HEK293 (cell line): ENCODE measurements at regions of chr1 and their contacts with region 1.

Region 1: DNA sequence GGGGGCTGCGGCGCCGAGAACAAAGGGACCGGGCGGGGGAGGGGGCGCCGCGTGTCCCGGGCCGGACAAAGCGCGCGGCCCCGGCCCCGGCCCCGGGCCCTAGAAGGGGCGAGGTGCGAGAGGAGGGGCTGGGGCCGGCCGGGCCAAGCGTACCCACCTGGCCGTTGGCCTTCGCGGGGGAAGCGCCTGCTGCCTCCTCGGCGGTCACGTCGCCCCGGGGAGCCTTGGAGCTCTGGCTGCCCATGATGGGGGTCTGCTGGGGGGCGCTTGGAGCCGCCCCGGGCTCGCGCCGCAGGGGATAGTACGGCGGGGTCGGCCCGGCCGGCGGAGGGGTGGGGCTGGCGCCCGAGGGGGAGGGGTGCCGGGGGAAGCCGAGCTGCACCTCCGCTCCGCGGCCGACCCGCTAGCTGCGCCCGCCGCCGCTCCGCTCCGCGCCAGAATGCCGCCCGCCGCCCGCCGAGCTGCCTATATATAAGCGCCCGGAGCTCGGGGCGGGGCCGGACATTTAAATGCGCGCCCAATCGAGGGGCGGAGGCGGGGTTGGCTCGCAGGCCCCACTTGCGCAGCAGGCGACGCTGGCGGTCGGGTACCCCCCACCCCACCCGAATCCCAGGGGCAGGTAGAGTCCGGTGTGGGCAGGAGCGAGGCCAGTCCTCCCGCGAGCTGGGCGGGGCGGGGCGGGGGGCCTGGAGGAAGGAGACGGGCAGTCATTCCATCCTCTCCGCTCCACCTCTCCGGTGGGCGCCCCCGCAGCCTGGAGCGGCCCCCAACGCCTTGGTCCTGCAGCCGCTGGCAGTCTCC is at the start of gene MARCKSL1:
- H3K4me3 ChIP-seq: peak within 1 kb of the TSS; percentile 84
- H3K27ac ChIP-seq: peak within 1 kb of the TSS; percentile 76; the same call in 1 of the 2 replicates
- H3K4me1 ChIP-seq: no peaks in the 10 kb centered on the region
- CTCF ChIP-seq: no peak

Region 2: DNA sequence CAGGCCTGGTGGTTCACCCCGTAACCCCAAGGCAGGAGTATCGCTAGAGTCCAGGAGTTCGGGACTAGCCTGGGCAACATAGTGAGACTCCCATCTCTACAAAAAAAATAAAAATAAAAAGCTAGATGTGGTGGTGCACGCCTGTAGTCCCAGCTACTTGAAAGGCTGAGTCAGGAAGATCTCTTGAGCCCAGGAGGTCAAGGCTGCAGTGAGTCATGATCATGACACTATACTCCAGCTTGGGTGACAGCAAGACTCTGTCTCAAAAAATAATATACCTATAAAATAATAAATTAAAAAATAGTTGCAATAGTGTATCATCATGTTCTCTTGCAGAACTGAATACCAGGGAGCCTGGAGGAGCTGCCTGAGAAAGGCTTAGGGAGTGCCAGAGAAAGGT is 283.1 kb before region 1 on chr1:
- CTCF ChIA-PET with region 1: no interaction called
- POLR2A ChIA-PET with region 1: no interaction called
- H3K4me3 ChIP-seq: no peak overlapping the region
- H3K27ac ChIP-seq: no peak overlapping the region
- H3K4me1 ChIP-seq: no peaks in the 10 kb centered on the region
- CTCF ChIP-seq: no peak

Region 3: GRCh38 chr1:32172621-32173245 is 163.3 kb before region 1 on chr1:
- CTCF ChIA-PET with region 1: no interaction called
- POLR2A ChIA-PET with region 1: no interaction called
- H3K4me3 ChIP-seq: no peak overlapping the region
- H3K27ac ChIP-seq: no peak overlapping the region
- H3K4me1 ChIP-seq: no peaks in the 10 kb centered on the region
- CTCF ChIP-seq: no peak

Region 4: DNA sequence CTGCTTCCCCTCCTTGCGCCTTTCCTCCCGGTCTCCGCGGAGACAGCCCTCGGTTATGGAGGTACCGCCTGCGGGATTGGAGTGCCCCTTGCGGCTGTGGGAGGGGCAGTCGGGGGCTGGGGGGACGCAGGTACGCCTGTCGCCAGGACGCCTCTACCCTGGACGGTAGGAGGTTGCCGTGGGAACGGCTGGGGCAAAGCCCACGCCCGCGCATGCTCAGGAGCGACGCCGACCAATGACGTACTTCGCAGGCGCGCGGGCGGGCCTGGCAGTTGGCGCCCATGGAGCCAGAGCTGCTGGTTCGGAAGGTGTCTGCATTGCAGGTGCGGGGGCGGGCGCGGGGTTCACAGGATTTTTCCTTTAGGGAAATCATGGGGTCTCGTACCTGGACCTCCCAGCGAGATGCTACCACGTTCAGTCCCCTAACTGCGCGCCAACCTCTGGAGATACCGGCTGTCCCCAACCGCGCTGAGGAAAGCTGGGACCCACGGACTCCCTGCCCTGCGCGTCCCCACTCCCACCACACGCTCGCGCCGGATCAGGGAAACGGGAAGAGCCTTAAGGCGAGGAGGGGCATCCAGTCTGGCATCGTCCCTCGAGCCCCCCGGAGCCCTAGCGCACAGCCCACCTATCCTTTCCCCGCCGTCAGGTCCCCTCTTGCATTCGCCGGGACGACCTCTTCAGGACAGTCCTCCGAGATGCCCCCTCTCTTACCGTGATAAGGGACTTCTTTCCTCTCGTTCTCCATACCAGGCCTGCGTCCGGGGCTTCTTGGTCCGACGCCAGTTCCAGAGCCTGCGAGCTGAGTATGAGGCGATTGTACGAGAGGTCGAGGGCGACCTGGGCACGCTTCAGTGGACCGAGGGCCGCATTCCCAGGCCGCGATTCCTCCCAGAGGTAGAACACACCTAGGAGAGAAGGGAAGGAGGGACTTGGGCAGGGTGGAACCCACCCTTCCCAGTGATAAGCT is 130.3 kb before region 1 on chr1 and contains the start of gene IQCC:
- CTCF ChIA-PET with region 1: no interaction called
- POLR2A ChIA-PET with region 1: interaction called, 16 read pairs
- H3K4me3 ChIP-seq: peak within 1 kb of the TSS; percentile 73
- H3K27ac ChIP-seq: peak within 1 kb of the TSS; percentile 48; the same call in 1 of the 2 replicates
- H3K4me1 ChIP-seq: peaks cover 4% of the 10 kb centered on the region
- CTCF ChIP-seq: peak; percentile 95

Region 5: DNA sequence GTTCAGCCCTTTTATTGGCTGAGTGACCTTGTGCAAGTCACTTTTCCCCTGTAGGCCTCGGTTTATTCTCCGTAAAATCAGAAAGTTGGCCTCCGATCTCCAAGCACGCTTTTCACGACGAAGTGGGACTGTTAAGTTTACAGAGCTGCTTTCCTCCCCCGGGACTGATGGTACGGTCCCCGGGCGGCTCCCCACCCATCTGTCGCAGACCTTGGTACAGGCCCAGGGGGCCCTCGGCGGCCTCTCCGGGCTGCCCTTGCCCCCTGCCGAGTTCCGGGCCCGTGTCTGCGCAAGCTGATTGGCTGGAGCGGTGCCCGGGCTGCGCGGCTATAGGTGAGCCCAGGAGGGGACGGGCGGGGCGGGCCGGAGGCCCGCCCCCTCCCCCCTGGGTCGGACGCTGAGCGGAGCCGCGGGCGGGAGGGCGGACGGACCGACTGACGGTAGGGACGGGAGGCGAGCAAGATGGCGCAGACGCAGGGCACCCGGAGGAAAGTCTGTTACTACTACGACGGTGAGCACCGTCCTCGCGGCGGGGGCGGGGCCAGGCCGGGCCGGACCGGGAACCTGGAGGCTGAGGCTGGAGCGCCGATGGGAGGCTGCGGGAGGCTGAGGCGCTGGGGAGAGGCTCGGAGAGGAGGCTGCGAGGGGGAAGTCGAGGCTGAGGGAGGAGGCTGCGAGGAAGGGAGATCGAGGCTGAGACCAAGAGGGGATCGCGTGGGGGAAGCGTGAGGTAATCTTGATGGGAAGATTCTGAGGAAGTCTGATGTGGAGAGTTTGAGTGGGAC is 44.1 kb before region 1 on chr1 and contains the start of gene HDAC1:
- CTCF ChIA-PET with region 1: no interaction called
- POLR2A ChIA-PET with region 1: interaction called, 28 read pairs
- H3K4me3 ChIP-seq: peak within 1 kb of the TSS; percentile 94
- H3K27ac ChIP-seq: peak within 1 kb of the TSS; percentile 73
- H3K4me1 ChIP-seq: peaks cover 4% of the 10 kb centered on the region; the same call in 1 of the 2 replicates
- CTCF ChIP-seq: peak; percentile 77

Region 6: DNA sequence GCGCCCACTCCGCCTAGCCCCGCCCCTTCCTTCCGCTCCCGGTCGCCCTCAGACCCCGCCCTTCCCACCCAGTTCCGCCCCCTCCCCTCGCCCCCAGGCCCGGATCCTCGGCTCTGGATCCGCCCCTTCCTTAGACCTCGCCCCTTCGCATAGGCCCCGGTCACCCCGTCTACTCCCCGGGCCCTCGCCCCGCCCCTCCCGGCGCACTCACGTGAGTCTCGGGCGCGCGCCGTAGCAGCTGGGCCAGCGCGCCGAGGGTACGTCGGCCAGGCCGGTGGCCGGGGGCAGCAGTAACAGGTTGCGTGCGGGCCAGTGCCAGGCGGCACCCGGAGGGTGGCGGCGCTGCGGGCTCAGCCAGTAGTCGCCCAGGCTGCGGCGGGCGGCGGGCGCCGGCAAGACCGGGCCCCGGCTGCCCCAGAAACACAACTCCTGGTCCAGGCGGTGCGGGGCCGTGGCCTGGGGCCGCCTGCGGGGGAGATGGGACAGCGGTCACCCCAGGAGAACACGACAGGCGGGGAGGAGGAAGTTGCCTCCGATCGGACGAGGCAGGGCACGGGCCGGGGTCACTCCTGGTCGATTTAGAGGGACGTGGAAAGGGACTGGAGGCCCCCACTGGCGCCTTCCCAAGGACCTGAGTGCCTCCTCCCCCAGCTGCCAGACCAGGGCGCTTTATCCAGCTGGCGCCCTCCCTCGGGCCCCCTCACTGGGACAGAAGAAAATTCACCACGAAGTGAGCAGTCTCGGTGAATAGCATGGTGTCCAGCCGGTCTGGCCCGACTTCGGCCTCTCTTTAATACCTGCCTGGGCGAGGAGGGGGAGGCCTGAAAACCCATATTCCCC is 15.6 kb after region 1 on chr1:
- CTCF ChIA-PET with region 1: interaction called, 3 read pairs
- POLR2A ChIA-PET with region 1: interaction called, 100 read pairs
- H3K4me3 ChIP-seq: peak overlapping the region; percentile 75
- H3K27ac ChIP-seq: peak overlapping the region; percentile 95
- H3K4me1 ChIP-seq: peaks cover 7% of the 10 kb centered on the region; the same call in 1 of the 2 replicates
- CTCF ChIP-seq: peak; percentile 64

Region 7: GRCh38 chr1:32464716-32465577 is 129.0 kb after region 1 on chr1 and contains the start of gene ZBTB8B:
- CTCF ChIA-PET with region 1: no interaction called
- POLR2A ChIA-PET with region 1: no interaction called
- H3K4me3 ChIP-seq: peak within 1 kb of the TSS; percentile 71
- H3K27ac ChIP-seq: no peak within 1 kb of the TSS; the same call in 1 of the 2 replicates
- H3K4me1 ChIP-seq: no peaks in the 10 kb centered on the region
- CTCF ChIP-seq: no peak

Region 8: GRCh38 chr1:32508751-32509140 is 172.8 kb after region 1 on chr1:
- CTCF ChIA-PET with region 1: no interaction called
- POLR2A ChIA-PET with region 1: no interaction called
- H3K4me3 ChIP-seq: no peak overlapping the region
- H3K27ac ChIP-seq: no peak overlapping the region
- H3K4me1 ChIP-seq: no peaks in the 10 kb centered on the region
- CTCF ChIP-seq: no peak